Right lobe of liver (tissue), 6 donors: ENCODE measurements at regions of chr13 and their contacts with region 1.

Region 1: GRCh38 chr13:59677966-59678814 is 485.5 kb downstream of the DIAPH3 start:
- DNase-seq: no peak
- ATAC-seq: peak; percentile 71 to 92 (median 78)
- H3K4me3 ChIP-seq: no peak overlapping the region
- H3K27ac ChIP-seq: no peak overlapping the region
- H3K4me1 ChIP-seq: no peaks in the 10 kb centered on the region
- H3K27me3 ChIP-seq: no peaks in the 10 kb centered on the region
- CTCF ChIP-seq: peak; percentile 66 to 83 (median 76)
- POLR2A ChIP-seq: no peak

Region 2: GRCh38 chr13:59391696-59392095 is 286.5 kb before region 1 on chr13:
- intact Hi-C with region 1: loop called in 1 of 2 experiments (anchors 10 kb)
- DNase-seq: peak in 1 of 3 donors; percentile 21
- ATAC-seq: peak; percentile 88 to 96 (median 92)
- H3K4me3 ChIP-seq: no peak overlapping the region
- H3K27ac ChIP-seq: no peak overlapping the region
- H3K4me1 ChIP-seq: no peaks in the 10 kb centered on the region
- H3K27me3 ChIP-seq: no peaks in the 10 kb centered on the region
- CTCF ChIP-seq: peak; percentile 76 to 85 (median 82)
- POLR2A ChIP-seq: no peak

Region 3: GRCh38 chr13:59641817-59642216 is 36.4 kb before region 1 on chr13:
- intact Hi-C with region 1: no loop called
- DNase-seq: no peak
- ATAC-seq: no peak
- H3K4me3 ChIP-seq: no peak overlapping the region
- H3K27ac ChIP-seq: no peak overlapping the region
- H3K4me1 ChIP-seq: no peaks in the 10 kb centered on the region
- H3K27me3 ChIP-seq: no peaks in the 10 kb centered on the region
- CTCF ChIP-seq: no peak
- POLR2A ChIP-seq: no peak

Region 4: GRCh38 chr13:59771272-59771671 is 93.1 kb after region 1 on chr13:
- intact Hi-C with region 1: loop called in 1 of 2 experiments (anchors 5 kb)
- DNase-seq: no peak
- ATAC-seq: peak in 3 of 4 donors; percentile 58 to 80 (median 61)
- H3K4me3 ChIP-seq: no peak overlapping the region
- H3K27ac ChIP-seq: no peak overlapping the region
- H3K4me1 ChIP-seq: no peaks in the 10 kb centered on the region
- H3K27me3 ChIP-seq: no peaks in the 10 kb centered on the region
- CTCF ChIP-seq: peak; percentile 51 to 76 (median 68)
- POLR2A ChIP-seq: no peak

Region 5: DNA sequence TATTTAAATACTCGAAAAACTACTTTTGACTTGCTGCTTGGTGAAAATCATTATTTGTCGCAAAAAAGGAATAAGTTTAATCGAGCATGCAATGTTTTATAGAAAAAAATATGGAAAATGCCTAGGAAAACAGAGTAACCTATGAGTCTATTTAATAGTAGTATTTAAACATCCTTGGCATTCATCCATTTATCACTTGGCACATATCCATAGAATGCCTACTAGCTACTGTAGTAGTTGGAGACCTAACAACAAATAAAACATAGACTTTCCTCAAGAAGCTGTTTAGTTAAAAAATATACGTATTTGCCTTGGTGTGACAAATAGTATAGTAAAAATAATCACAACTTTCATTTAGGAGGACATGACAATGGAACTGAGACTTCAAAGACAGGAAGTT is 183.5 kb after region 1 on chr13:
- intact Hi-C with region 1: no loop called
- DNase-seq: no peak
- ATAC-seq: no peak
- H3K4me3 ChIP-seq: no peak overlapping the region
- H3K27ac ChIP-seq: no peak overlapping the region
- H3K4me1 ChIP-seq: no peaks in the 10 kb centered on the region
- H3K27me3 ChIP-seq: no peaks in the 10 kb centered on the region
- CTCF ChIP-seq: no peak
- POLR2A ChIP-seq: no peak